Activated T-helper 2 cell treated with anti-CD3 and anti-CD28 coated beads, Interferon-gamma antibody, Interleukin-2, Interleukin-4, amounts not matched to agents 10 μg/mL and 5 μg/mL and 100 μg/mL, durations not matched to agents 14 hours and 24 hours and 36 hours (primary cell): ENCODE measurements at regions of chr17 and their contacts with region 1.

Region 1: GRCh38 chr17:67390646-67391384 is 13.7 kb downstream of the PITPNC1 start:
- DNase-seq: peak; percentile 64
- H3K4me3 Mint-ChIP-seq: peak overlapping the region; percentile 67
- H3K27ac Mint-ChIP-seq: peak overlapping the region; percentile 85
- H3K4me1 Mint-ChIP-seq: peaks cover 35% of the 10 kb centered on the region
- H3K27me3 Mint-ChIP-seq: no peaks in the 10 kb centered on the region

Region 2: GRCh38 chr17:67312265-67312664 is 78.5 kb before region 1 on chr17:
- intact Hi-C with region 1: no loop called
- DNase-seq: no peak
- H3K4me3 Mint-ChIP-seq: no peak overlapping the region
- H3K27ac Mint-ChIP-seq: no peak overlapping the region
- H3K4me1 Mint-ChIP-seq: no peaks in the 10 kb centered on the region
- H3K27me3 Mint-ChIP-seq: no peaks in the 10 kb centered on the region

Region 3: DNA sequence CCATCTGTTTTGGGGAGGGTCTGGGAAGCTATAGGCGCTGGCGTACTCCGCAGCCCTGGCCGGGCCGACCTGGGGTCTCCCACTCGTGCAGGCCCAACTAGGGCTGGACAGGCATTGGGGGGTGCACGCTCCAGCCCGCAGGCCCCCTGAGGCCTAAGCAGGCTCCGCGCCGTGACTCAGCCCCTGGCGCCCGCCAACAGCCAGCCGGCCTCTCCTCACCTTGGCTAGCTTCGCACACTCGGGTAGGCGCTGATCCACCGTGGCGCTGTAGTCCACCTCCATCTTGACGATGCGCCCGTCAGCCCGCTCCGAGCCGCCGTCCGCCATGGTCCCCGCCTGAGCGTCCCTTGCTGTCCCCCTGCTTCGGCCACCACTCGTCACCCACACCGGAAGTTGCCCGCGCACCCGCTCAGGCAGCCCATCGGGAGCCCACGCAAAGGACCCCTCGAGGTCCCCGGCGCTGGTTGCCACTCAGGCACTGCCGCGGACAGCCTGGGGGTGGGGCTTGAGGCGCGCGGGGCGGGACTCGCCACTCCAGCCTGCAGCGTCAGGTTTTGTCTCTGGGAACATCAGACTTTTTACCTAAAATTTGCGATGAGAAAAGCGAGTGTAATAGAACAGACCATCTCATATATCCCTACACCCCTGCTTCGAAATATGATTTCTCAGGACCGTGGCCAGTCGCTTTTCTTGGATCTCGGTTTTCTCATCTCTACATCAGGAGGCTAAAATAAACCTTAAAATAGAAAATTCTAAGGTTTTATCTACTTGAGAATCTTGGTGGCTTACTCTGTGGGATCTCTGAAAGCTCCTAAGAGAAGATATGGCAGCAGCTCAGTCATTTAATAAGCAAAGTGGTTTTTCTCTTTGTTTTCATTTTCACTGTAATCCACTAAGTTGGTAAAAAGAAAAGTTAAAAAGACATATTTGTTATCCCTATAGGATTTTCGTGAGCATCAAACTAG is 24.3 kb before region 1 on chr17 and contains the start of gene PSMD12:
- intact Hi-C with region 1: loop called (anchors 1 kb)
- DNase-seq: peak; percentile 90
- H3K4me3 Mint-ChIP-seq: peak within 1 kb of the TSS; percentile 96
- H3K27ac Mint-ChIP-seq: peak within 1 kb of the TSS; percentile 95
- H3K4me1 Mint-ChIP-seq: peaks cover 45% of the 10 kb centered on the region
- H3K27me3 Mint-ChIP-seq: peaks cover 20% of the 10 kb centered on the region
- total RNA-seq, gene PSMD12: 75.1 and 75.4 TPM in 2 replicates

Region 4: GRCh38 chr17:67452681-67453554 is 62.1 kb after region 1 on chr17:
- intact Hi-C with region 1: loop called (anchors 1 kb)
- DNase-seq: no peak
- H3K4me3 Mint-ChIP-seq: peak overlapping the region; percentile 34
- H3K27ac Mint-ChIP-seq: peak overlapping the region; percentile 87
- H3K4me1 Mint-ChIP-seq: peaks cover 55% of the 10 kb centered on the region
- H3K27me3 Mint-ChIP-seq: no peaks in the 10 kb centered on the region

Region 5: GRCh38 chr17:67475236-67475937 is 84.6 kb after region 1 on chr17:
- intact Hi-C with region 1: loop called (anchors 1 kb)
- DNase-seq: peak; percentile 77
- H3K4me3 Mint-ChIP-seq: peak overlapping the region; percentile 30
- H3K27ac Mint-ChIP-seq: peak overlapping the region; percentile 62
- H3K4me1 Mint-ChIP-seq: peaks cover 44% of the 10 kb centered on the region
- H3K27me3 Mint-ChIP-seq: peaks cover 3% of the 10 kb centered on the region